GM23248 (cell line): ENCODE measurements at regions of chr2 and their contacts with region 1.

Region 1: GRCh38 chr2:174465327-174465726 is 21.5 kb downstream of the GPR155 start:
- DNase-seq: peak; percentile 7
- H3K4me3 ChIP-seq: no peak overlapping the region
- H3K27ac ChIP-seq: no peak overlapping the region
- H3K4me1 ChIP-seq: no peaks in the 10 kb centered on the region
- H3K27me3 ChIP-seq: no peaks in the 10 kb centered on the region

Region 2: DNA sequence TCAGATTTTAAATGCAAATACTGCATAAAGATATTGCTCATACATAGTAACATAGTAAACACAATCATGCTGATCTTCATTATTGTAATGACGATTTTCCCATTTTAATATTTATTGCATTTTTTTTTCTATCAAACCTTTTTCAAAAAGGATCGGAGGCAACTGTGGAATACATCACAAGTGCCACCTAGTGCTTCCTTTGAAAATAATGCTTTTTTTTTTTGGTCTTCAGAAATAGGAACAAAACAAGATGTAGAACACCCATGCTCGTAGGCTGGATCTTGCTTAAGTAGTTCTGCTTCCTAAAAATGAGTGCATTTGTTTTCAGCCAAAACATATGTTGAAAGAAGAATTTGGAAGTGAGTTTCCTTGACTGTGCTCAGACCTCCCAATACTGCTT is 57.2 kb after region 1 on chr2:
- in situ Hi-C with region 1: loop called (anchors 10 kb)
- DNase-seq: peak; percentile 51
- H3K4me3 ChIP-seq: no peak overlapping the region
- H3K27ac ChIP-seq: no peak overlapping the region
- H3K4me1 ChIP-seq: no peaks in the 10 kb centered on the region
- H3K27me3 ChIP-seq: peaks cover 41% of the 10 kb centered on the region

Region 3: DNA sequence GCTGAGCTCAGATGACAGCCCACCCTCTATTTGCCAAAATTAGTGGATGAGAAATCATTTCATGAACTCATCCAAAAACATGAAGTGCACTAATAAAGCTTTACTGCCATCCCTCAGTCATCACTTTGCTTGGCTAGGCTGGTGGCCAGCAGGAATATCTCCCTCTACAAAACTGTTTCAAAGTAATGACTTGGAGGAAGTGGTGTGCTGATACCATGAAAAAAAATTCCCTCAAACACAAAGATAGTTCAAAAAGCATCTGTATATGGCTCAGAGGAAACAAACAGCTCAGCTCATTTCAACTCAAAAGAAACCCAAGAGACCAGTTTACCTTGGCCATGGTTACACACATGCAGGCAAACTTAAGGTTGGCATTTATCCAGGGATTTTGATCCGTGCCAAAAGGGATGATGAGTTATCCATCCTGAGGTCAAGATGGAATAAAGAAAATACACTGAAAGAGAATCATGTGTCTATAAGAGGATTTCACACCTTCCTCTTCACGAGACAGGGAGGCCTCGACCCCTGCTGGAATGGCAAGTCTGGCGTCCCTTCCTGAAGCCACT is 150.6 kb after region 1 on chr2:
- in situ Hi-C with region 1: no loop called
- DNase-seq: peak; percentile 75
- H3K4me3 ChIP-seq: 0 out of 2 replicates have a peak overlapping the region, but pooled peaks have one; percentile 3
- H3K27ac ChIP-seq: peak overlapping the region; percentile 83
- H3K4me1 ChIP-seq: peaks cover 58% of the 10 kb centered on the region
- H3K27me3 ChIP-seq: no peaks in the 10 kb centered on the region

Region 4: GRCh38 chr2:174697255-174697654 is 231.9 kb after region 1 on chr2:
- in situ Hi-C with region 1: loop called (anchors 10 kb)
- DNase-seq: peak; percentile 78
- H3K4me3 ChIP-seq: no peak overlapping the region
- H3K27ac ChIP-seq: no peak overlapping the region
- H3K4me1 ChIP-seq: no peaks in the 10 kb centered on the region
- H3K27me3 ChIP-seq: no peaks in the 10 kb centered on the region; the same call in 1 of the 2 replicates